Mammary epithelial cell (primary cell): ENCODE measurements at regions of chr1 and their contacts with region 1.

Region 1: DNA sequence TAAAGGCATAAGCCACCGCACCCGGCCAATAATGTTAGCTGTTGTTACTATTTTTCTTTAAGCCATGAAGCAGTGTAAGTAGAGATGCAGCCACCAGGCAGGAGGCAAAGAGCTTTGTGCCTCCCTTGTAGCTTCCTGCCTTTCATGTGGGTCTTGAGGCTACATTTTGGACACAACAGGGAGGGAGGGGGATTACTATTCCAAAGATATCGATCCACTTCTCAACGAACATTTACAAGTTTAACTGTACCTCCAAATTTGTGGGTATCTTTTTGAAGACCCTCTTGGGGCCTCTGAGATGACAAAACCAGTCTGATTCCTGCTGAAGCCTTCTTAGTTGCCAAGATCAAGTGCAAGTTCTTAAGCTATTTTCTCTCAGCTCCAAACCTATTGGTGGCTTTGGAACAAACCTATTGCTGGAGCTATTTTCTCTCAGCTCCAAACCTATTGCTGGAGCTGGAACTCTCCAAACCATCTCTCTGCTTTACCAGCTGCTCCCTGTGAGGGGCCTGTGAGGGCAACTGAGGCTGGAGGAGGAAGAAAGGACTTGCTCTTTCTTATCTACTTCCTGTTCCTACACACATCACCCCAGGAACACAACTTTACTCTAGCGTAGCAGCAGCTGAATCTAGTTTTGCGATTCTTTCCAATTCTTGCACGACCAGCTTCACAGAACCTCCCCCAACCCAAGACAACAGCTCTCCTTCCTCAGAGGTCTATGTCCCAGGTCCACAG is 16.1 kb upstream of the RCAN3 start:
- DNase-seq: no peak
- H3K4me3 ChIP-seq: no peak overlapping the region
- H3K27ac ChIP-seq: no peak overlapping the region
- H3K4me1 ChIP-seq: no peaks in the 10 kb centered on the region
- H3K27me3 ChIP-seq: no peaks in the 10 kb centered on the region
- CTCF ChIP-seq: no peak

Region 2: DNA sequence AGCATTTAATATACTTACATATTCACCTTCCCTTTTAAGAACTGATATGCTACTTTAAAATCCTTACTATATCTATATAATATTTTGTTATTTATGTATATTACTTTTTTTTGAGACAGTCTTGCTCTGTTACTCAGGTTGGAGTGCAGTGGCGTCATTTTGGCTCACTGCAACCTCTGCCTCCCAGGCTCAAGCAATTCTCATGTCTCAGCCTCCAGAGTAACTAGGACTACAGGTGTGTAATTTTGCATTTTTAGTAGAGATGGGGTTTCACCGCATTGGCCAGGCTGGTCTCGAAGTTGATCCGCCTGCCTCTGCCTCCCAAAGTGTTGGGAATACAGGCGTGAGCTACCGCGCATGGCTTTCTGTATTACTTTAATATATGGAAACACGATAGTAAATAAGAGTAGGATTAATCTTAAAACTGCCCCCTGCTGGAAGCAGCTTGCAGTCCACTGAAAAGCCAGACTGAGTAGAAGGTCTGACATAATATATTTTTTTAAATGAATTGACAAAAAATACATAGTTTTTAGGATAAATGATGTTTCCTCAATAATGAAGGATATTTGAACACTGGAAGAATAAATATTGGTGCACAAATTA is 40.5 kb after region 1 on chr1:
- CTCF ChIA-PET with region 1: no interaction called
- dilution Hi-C with region 1: no loop called
- in situ Hi-C with region 1: no loop called
- intact Hi-C with region 1: loop called (anchors 5 kb)
- DNase-seq: no peak
- H3K4me3 ChIP-seq: no peak overlapping the region
- H3K27ac ChIP-seq: no peak overlapping the region
- H3K4me1 ChIP-seq: no peaks in the 10 kb centered on the region
- H3K27me3 ChIP-seq: no peaks in the 10 kb centered on the region
- CTCF ChIP-seq: peak; percentile 58 to 71